ENCODE measurements at regions of chr17 and their contacts with region 1.

Region 1: GRCh38 chr17:48787828-48788227 is 29.2 kb downstream of the TTLL6 start:
- DNase-seq: no peak
- ATAC-seq: no peak
- H3K4me3 ChIP-seq: no peak overlapping the region
- H3K27ac ChIP-seq: no peak overlapping the region
- H3K4me1 ChIP-seq: no peaks in the 10 kb centered on the region
- H3K27me3 ChIP-seq: no peaks in the 10 kb centered on the region
- CTCF ChIP-seq: no peak
- POLR2A ChIP-seq: no peak

Region 2: GRCh38 chr17:48543107-48543853 is 244.5 kb before region 1 on chr17:
- intact Hi-C with region 1: no loop called
- DNase-seq: peak in 1 of 3 donors; percentile 56
- ATAC-seq: peak; percentile 33 to 55 (median 48)
- H3K4me3 ChIP-seq: peak overlapping the region; percentile 42 to 56 (median 45)
- H3K27ac ChIP-seq: peak overlapping the region; percentile 64 to 78 (median 75)
- H3K4me1 ChIP-seq: peaks cover 0 to 6% (median 0%) of the 10 kb centered on the region in 4 donors
- H3K27me3 ChIP-seq: peaks cover 0 to 11% of the 10 kb centered on the region in 2 donors
- CTCF ChIP-seq: peak in 2 of 4 donors; percentile 6 to 11
- POLR2A ChIP-seq: no peak

Region 3: GRCh38 chr17:48678141-48678971 is 109.5 kb before region 1 on chr17:
- intact Hi-C with region 1: loop called in 1 of 2 experiments (anchors 10 kb)
- DNase-seq: peak; percentile 66 to 70 (median 67)
- ATAC-seq: peak; percentile 93 to 98 (median 96)
- H3K4me3 ChIP-seq: no peak overlapping the region
- H3K27ac ChIP-seq: no peak overlapping the region
- H3K4me1 ChIP-seq: no peaks in the 10 kb centered on the region
- H3K27me3 ChIP-seq: no peaks in the 10 kb centered on the region
- CTCF ChIP-seq: peak in 3 of 4 donors; percentile 83 to 96 (median 95)
- POLR2A ChIP-seq: no peak

Region 4: GRCh38 chr17:48724251-48725003 is 63.4 kb before region 1 on chr17:
- intact Hi-C with region 1: loop called in 1 of 2 experiments (anchors 10 kb)
- DNase-seq: peak; percentile 85 to 89 (median 87)
- ATAC-seq: peak; percentile 87 to 95 (median 92)
- H3K4me3 ChIP-seq: no peak overlapping the region
- H3K27ac ChIP-seq: no peak overlapping the region
- H3K4me1 ChIP-seq: peaks cover 0 to 9% (median 0%) of the 10 kb centered on the region in 4 donors
- H3K27me3 ChIP-seq: peaks cover 21 to 75% of the 10 kb centered on the region in 2 donors
- CTCF ChIP-seq: peak; percentile 58 to 81 (median 74)
- POLR2A ChIP-seq: no peak

Region 5: DNA sequence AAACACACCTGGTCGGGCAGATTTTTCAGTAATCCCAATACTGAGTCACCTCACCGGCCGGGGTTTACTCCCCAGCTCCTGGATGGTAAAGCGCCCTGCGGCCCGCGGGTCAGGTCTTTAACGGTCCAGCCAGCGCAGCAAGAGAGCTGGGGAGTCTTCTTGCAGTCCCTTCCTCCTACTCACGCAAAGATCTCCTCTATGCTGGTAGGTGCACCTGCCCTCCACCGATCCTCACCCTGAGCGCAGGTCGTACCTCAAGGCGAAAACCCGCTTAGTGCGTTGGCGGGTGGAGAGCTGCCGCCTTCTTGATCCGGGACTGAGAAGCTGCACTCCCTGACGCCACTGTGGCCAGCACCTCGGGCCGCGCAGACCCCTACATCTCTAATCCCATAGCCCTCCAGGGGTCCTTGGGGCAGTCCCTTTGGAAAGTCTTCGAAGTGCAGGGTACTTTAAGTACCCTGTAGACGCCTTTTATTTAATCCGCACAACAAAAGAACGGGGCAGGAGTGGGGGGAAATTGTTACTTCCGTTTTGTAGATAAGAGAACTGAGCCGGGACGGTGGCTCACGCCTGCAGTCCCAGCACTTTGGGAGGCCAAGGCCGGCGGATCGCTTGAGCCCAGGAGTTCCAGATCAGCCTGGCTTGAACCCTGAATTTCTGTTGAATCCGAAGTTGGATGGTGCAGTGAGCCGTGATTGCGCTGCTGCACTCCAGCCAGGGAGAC is 48.9 kb before region 1 on chr17:
- intact Hi-C with region 1: loop called in 1 of 2 experiments (anchors 10 kb)
- DNase-seq: no peak
- ATAC-seq: peak in 1 of 4 donors; percentile 19
- H3K4me3 ChIP-seq: no peak overlapping the region
- H3K27ac ChIP-seq: no peak overlapping the region
- H3K4me1 ChIP-seq: no peaks in the 10 kb centered on the region
- H3K27me3 ChIP-seq: peaks cover 20 to 38% of the 10 kb centered on the region in 2 donors
- CTCF ChIP-seq: no peak
- POLR2A ChIP-seq: no peak

Measured in right lobe of liver (tissue), 6 donors.